CD4-positive, alpha-beta T cell (primary cell): ENCODE measurements at regions of chr6 and their contacts with region 1.

Region 1: DNA sequence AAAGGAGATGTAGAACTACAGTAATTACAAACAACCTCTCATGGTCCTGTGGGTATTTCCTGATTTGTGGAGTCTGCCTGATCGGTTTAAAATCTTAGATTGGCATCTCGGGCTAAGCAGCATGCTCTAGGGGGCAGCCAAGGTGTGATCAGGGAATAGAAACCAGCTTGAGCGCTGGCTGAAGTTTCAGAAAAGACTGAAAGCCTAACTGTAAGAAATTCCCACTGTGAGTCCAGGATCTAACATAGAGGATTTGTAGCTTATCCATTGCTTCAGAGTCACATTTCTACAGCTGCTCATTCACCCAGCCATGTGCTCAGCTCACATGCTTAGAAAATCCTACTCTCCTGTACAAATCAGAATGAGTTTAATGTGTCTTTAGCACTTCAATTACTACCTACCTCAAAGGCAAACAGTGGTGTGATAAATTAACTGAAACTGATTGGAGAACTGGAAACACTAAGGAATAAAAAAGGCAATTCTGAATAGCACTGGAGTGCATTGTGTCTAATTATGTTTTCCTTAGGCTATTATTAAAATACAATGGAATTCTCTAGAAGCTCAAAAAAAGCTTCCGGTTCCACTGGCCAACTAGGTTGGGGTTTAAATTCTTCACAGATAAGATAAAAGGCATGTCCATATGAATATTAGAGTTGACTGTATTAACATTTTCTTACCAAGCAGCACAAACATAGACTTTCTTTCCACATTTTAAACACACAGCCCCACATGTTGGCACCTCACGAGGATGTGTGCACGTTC is 73.8 kb upstream of the MPC1 start:
- DNase-seq: peak in 5 of 14 experiments; percentile 21 to 58 (median 47)
- ATAC-seq: no peak
- H3K4me3 ChIP-seq: no peak overlapping the region
- H3K4me3 Mint-ChIP-seq: no peak overlapping the region
- H3K27ac ChIP-seq: no peak overlapping the region
- H3K27ac Mint-ChIP-seq: no peak overlapping the region
- H3K4me1 ChIP-seq: peaks cover 3% of the 10 kb centered on the region
- H3K4me1 Mint-ChIP-seq: peaks cover 4% of the 10 kb centered on the region
- H3K27me3 ChIP-seq: no peaks in the 10 kb centered on the region
- H3K27me3 Mint-ChIP-seq: no peaks in the 10 kb centered on the region
- CTCF ChIP-seq: peak; percentile 39

Region 2: DNA sequence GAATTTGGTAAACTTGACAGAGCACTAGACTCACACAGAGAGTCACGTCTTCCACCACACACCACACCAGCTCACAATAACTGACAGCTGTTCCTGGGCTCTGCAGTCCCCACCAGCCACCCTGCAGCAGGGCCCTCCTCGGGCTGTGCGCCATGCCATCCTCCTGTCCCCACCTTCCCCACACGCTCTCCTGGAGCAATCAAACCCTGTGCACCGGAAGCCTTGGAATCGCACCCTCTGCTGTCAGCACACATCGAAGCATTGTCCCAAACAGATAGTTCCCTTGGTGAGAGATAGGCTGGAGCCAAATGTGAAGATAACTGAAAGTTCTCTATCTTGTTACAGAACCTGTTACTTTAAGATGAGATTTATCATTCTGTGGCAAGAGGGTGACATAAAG is 479.9 kb before region 1 on chr6:
- CTCF ChIA-PET with region 1: no interaction called
- POLR2A ChIA-PET with region 1: no interaction called
- intact Hi-C with region 1: no loop called
- DNase-seq: no peak
- ATAC-seq: no peak
- H3K4me3 ChIP-seq: no peak overlapping the region
- H3K4me3 Mint-ChIP-seq: no peak overlapping the region
- H3K27ac ChIP-seq: no peak overlapping the region
- H3K27ac Mint-ChIP-seq: no peak overlapping the region
- H3K4me1 ChIP-seq: no peaks in the 10 kb centered on the region
- H3K4me1 Mint-ChIP-seq: no peaks in the 10 kb centered on the region
- H3K27me3 ChIP-seq: no peaks in the 10 kb centered on the region
- H3K27me3 Mint-ChIP-seq: no peaks in the 10 kb centered on the region
- CTCF ChIP-seq: no peak

Region 3: GRCh38 chr6:166477647-166478365 is 21.2 kb after region 1 on chr6:
- CTCF ChIA-PET with region 1: no interaction called
- POLR2A ChIA-PET with region 1: no interaction called
- intact Hi-C with region 1: loop called in 1 of 2 experiments (anchors 2 kb)
- DNase-seq: no peak
- ATAC-seq: no peak
- H3K4me3 ChIP-seq: no peak overlapping the region
- H3K4me3 Mint-ChIP-seq: no peak overlapping the region
- H3K27ac ChIP-seq: no peak overlapping the region
- H3K27ac Mint-ChIP-seq: no peak overlapping the region
- H3K4me1 ChIP-seq: peaks cover 8% of the 10 kb centered on the region
- H3K4me1 Mint-ChIP-seq: no peaks in the 10 kb centered on the region
- H3K27me3 ChIP-seq: no peaks in the 10 kb centered on the region
- H3K27me3 Mint-ChIP-seq: no peaks in the 10 kb centered on the region
- CTCF ChIP-seq: no peak